ENCODE measurements at regions of chr16 and their contacts with region 1.

Region 1: DNA sequence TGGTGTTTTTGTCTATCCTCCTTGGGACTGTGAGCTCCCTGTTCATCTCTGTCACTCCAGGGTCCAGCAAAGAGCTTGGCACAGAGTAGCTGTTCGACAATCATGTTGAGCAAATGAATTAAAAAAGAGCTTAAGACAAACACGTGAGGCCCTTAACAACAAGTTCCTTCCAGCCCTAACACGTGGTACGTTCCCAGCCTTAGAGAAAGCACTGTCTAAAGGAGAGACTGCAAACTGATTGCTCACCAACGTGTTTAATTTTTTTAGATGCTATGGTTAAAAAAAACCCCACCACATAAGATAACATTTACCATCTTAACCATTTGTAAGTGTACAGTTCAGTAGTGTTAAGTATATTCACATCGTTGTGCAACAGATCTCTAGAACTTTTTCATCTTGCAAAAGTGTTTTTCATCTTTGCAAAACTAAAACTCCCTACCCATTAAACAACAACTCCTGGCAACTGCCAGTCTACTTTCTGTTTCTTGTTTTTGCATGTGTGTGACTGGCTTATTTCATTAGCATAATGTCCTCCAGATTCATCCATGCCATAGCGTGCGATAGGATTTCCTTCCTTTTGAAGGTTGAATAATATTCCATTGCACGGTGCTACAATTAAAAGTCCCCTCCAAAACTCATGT is 28.2 kb downstream of the LAT start:
- DNase-seq: peak in 8 of 14 experiments; percentile 17 to 78 (median 50)
- ATAC-seq: peak; percentile 72
- H3K4me3 ChIP-seq: no peak overlapping the region
- H3K4me3 Mint-ChIP-seq: peak overlapping the region; percentile 74
- H3K27ac ChIP-seq: peak overlapping the region; percentile 58 to 64
- H3K27ac Mint-ChIP-seq: peak overlapping the region; percentile 97
- H3K4me1 ChIP-seq: peaks cover 61% of the 10 kb centered on the region
- H3K4me1 Mint-ChIP-seq: peaks cover 57% of the 10 kb centered on the region
- H3K27me3 ChIP-seq: no peaks in the 10 kb centered on the region
- H3K27me3 Mint-ChIP-seq: no peaks in the 10 kb centered on the region
- CTCF ChIP-seq: no peak

Region 2: GRCh38 chr16:28991687-28992086 is 21.3 kb before region 1 on chr16:
- CTCF ChIA-PET with region 1: interaction called, 3 read pairs
- POLR2A ChIA-PET with region 1: interaction called, 100 read pairs
- intact Hi-C with region 1: no loop called
- DNase-seq: no peak
- ATAC-seq: no peak
- H3K4me3 ChIP-seq: no peak overlapping the region
- H3K4me3 Mint-ChIP-seq: no peak overlapping the region
- H3K27ac ChIP-seq: no peak overlapping the region
- H3K27ac Mint-ChIP-seq: peak overlapping the region; percentile 100
- H3K4me1 ChIP-seq: peaks cover 62% of the 10 kb centered on the region
- H3K4me1 Mint-ChIP-seq: peaks cover 51% of the 10 kb centered on the region
- H3K27me3 ChIP-seq: no peaks in the 10 kb centered on the region
- H3K27me3 Mint-ChIP-seq: no peaks in the 10 kb centered on the region
- CTCF ChIP-seq: no peak